ENCODE measurements at regions of chr6 and their contacts with region 1.

Region 1: DNA sequence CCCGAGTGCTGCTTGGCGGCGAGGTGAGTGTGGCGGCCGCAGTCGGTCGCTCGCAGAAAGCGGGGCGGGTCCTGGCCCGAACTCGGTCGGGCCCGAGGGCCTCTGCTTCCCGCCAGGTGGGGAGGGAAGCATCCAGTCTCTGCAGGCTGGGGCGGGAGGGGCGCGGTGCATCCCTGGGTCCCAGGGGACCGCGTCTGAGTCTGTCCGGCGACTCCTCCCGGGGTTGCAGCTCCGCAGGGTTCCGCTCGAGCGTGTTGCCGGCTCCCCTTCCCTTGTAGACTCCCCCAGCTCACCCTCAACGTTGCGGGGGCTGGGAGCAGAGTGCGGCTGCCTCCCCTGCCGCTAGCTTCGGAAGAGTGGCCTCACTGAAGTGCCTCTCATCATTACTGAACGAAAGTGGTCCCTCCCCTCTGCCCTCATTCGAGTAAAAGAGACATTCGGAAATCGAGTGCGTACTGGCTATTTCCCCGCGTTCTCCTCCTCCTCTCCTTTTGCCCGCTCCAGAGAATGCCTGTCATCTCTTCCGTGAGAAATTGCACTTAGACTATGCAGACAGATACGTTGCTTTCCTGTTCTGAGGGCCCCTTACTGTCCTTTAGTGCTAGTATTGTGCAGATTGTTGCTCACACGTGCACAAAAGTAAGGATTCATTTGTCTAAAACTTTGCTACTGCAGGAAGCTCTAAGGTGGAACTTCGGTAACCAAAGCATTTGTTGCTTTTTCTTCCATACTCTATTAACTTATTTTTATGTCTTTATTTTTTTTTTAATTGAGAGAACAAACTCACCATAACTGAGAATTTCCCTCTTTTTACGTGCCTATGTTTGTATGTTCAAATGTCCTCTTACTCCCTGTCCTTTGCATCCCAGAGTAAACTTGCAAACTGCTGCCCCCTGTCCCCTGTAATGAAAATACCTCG is 751 bp downstream of the MAP3K4 start:
- DNase-seq: peak; percentile 53
- CTCF ChIP-seq: peak; percentile 64

Region 2: GRCh38 chr6:161011492-161012480 is 19.5 kb after region 1 on chr6:
- CTCF ChIA-PET with region 1: interaction called, 50 read pairs
- POLR2A ChIA-PET with region 1: no interaction called
- DNase-seq: no peak
- CTCF ChIP-seq: no peak

Region 3: GRCh38 chr6:161029195-161029809 is 37.0 kb after region 1 on chr6:
- CTCF ChIA-PET with region 1: interaction called, 23 read pairs
- POLR2A ChIA-PET with region 1: no interaction called
- DNase-seq: peak; percentile 52
- CTCF ChIP-seq: no peak

Region 4: DNA sequence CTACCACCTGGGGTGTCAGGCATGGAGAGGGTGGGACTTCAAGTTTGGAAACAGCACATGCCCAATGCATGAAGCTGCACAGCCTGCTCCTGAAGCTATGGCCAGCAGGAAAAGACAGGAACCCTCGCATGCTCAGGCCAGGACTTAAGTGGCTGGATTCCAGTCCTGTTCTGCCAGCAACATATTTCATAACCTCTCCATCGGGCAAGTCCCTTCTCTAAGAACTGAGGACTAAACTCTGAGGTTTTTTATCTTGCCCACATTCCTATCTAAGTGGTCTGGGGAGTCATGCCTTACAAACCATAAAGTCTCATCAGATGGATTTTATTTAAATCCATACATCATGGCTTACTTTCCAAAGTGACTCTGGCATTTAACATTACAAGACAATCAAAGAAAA is 309.0 kb after region 1 on chr6:
- CTCF ChIA-PET with region 1: no interaction called
- POLR2A ChIA-PET with region 1: no interaction called
- DNase-seq: no peak
- CTCF ChIP-seq: no peak

Region 5: GRCh38 chr6:162306616-162307015 is 1314.3 kb after region 1 on chr6:
- CTCF ChIA-PET with region 1: no interaction called
- POLR2A ChIA-PET with region 1: no interaction called
- DNase-seq: no peak
- CTCF ChIP-seq: no peak